ENCODE measurements at regions of chr4 and their contacts with region 1.

Region 1: GRCh38 chr4:144174401-144175067 is 34.0 kb upstream of the GYPA start:
- DNase-seq: peak; percentile 50
- H3K4me3 ChIP-seq: no peak overlapping the region
- H3K27ac ChIP-seq: no peak overlapping the region
- H3K4me1 ChIP-seq: no peaks in the 10 kb centered on the region
- H3K27me3 ChIP-seq: peaks cover 2% of the 10 kb centered on the region
- CTCF ChIP-seq: peak; percentile 23 to 44

Region 2: GRCh38 chr4:144355809-144356757 is 181.5 kb after region 1 on chr4:
- CTCF ChIA-PET with region 1: no interaction called
- dilution Hi-C with region 1: no loop called
- in situ Hi-C with region 1: no loop called
- intact Hi-C with region 1: loop called (anchors 10 kb)
- DNase-seq: peak; percentile 86
- H3K4me3 ChIP-seq: no peak overlapping the region
- H3K27ac ChIP-seq: no peak overlapping the region
- H3K4me1 ChIP-seq: peaks cover 30% of the 10 kb centered on the region
- H3K27me3 ChIP-seq: no peaks in the 10 kb centered on the region
- CTCF ChIP-seq: peak; percentile 27 to 46

Region 3: GRCh38 chr4:144754562-144755410 is 580.3 kb after region 1 on chr4:
- CTCF ChIA-PET with region 1: no interaction called
- dilution Hi-C with region 1: no loop called
- in situ Hi-C with region 1: no loop called
- intact Hi-C with region 1: loop called (anchors 1 kb)
- DNase-seq: peak; percentile 43
- H3K4me3 ChIP-seq: no peak overlapping the region
- H3K27ac ChIP-seq: no peak overlapping the region
- H3K4me1 ChIP-seq: peaks cover 5% of the 10 kb centered on the region
- H3K27me3 ChIP-seq: no peaks in the 10 kb centered on the region
- CTCF ChIP-seq: peak; percentile 78 to 81

Region 4: DNA sequence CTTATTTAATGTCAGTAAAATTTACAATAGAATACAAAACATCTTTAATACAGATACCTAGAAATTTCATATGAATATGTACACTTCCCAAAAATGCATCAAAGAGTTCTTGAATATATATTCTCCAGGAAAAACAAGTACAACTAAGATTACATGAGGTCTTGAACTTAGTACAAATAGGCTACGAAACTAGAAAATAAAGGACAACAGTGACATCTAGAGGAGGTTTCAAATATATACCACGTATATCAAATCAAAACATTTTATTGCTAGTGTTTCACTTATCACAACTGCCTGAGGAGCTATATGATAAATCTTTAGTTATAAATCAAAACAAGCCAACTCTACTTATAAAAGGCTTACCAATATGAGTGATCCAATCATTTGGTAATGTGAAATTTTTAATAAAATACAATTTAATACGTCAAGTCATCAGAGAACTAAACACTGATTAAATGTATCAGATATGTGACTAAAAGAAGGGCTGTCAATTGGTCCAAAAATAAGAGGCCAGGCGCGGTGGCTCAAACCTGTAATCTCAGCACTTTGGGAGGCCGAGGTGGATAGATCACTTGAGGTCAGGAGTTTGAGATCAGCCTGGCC is 886.9 kb after region 1 on chr4:
- CTCF ChIA-PET with region 1: no interaction called
- dilution Hi-C with region 1: no loop called
- in situ Hi-C with region 1: loop called (anchors 10 to 25 kb)
- intact Hi-C with region 1: loop called (anchors 2 kb)
- DNase-seq: peak; percentile 35
- H3K4me3 ChIP-seq: no peak overlapping the region
- H3K27ac ChIP-seq: no peak overlapping the region
- H3K4me1 ChIP-seq: peaks cover 6% of the 10 kb centered on the region
- H3K27me3 ChIP-seq: no peaks in the 10 kb centered on the region
- CTCF ChIP-seq: peak; percentile 32 to 42

Region 5: DNA sequence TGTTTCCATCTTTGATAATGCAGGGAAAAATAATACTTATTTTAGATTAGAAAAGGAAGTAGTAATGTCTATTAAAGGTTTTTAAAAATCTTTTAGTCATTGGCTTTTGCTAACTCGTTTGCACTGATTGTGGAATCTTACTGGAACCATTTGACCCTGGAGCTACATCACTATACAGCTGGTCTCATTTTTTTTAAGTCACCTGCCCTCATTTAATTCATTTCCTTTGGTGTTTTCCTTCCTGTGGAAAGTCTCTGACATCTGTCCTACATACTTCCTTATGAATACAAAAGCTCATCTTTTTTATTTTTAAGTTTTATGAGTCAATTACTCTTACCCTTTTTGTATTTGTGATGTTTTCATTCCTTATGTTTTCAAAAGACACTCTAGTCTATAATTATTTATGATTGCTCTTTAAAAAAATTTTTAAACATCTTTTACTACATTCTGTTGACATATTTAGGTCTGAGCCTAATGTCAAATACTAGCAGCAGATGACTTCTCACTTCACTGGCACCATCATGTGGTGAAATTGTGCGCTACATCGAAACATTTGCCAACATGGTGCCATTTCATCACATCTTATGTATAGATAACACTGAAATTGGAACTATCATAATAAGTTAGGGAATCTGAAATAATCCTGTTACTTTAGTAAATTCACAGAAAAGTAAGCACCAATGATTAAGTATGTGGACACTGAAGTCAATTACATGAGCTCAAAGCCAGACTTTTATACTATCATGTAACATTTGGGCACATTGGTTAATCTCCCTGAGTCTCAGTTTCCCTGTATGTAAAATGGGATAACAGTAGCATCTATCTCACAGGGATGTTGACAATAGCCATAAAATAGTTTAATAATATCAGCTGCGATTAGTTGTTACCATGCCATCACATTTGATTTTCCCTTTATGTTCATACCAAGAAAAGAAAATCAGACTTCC is 1435.2 kb after region 1 on chr4:
- CTCF ChIA-PET with region 1: no interaction called
- dilution Hi-C with region 1: no loop called
- in situ Hi-C with region 1: no loop called
- intact Hi-C with region 1: loop called (anchors 10 kb)
- DNase-seq: peak; percentile 46
- H3K4me3 ChIP-seq: no peak overlapping the region
- H3K27ac ChIP-seq: no peak overlapping the region
- H3K4me1 ChIP-seq: no peaks in the 10 kb centered on the region
- H3K27me3 ChIP-seq: no peaks in the 10 kb centered on the region
- CTCF ChIP-seq: peak; percentile 81 to 84